ENCODE measurements at regions of chr6 and their contacts with region 1.

Region 1: GRCh38 chr6:159693128-159693893 is at the start of gene SOD2:
- DNase-seq: peak; percentile 82 to 90 (median 86)
- H3K4me3 ChIP-seq: peak within 1 kb of the TSS; percentile 81
- H3K27ac ChIP-seq: peak within 1 kb of the TSS; percentile 91 to 92
- H3K4me1 ChIP-seq: peaks cover 9% of the 10 kb centered on the region
- H3K27me3 ChIP-seq: no peaks in the 10 kb centered on the region
- CTCF ChIP-seq: peak in 2 of 3 donors; percentile 8 to 13
- EP300 ChIP-seq: no peak
- POLR2A ChIP-seq: peak; percentile 66
- total RNA-seq, gene SOD2: 164 to 580 (median 215) TPM

Region 2: GRCh38 chr6:159726918-159727716 is 33.8 kb after region 1 on chr6 and contains the start of gene WTAP:
- intact Hi-C with region 1: loop called in 2 of 4 experiments (anchors 2 kb)
- DNase-seq: peak; percentile 98
- H3K4me3 ChIP-seq: peak within 1 kb of the TSS; percentile 72
- H3K27ac ChIP-seq: peak within 1 kb of the TSS; percentile 94 to 100
- H3K4me1 ChIP-seq: peaks cover 7% of the 10 kb centered on the region
- H3K27me3 ChIP-seq: no peaks in the 10 kb centered on the region
- CTCF ChIP-seq: peak in 1 of 3 donors; percentile 6
- EP300 ChIP-seq: peak; percentile 47
- POLR2A ChIP-seq: peak; percentile 81
- total RNA-seq, gene WTAP: 89.1 to 117 (median 95.4) TPM

Region 3: GRCh38 chr6:159756508-159756907 is 63.2 kb after region 1 on chr6:
- intact Hi-C with region 1: loop called in 2 of 4 experiments (anchors 2 to 5 kb)
- DNase-seq: no peak
- H3K4me3 ChIP-seq: no peak overlapping the region
- H3K27ac ChIP-seq: no peak overlapping the region
- H3K4me1 ChIP-seq: peaks cover 4% of the 10 kb centered on the region
- H3K27me3 ChIP-seq: no peaks in the 10 kb centered on the region
- CTCF ChIP-seq: no peak
- EP300 ChIP-seq: no peak
- POLR2A ChIP-seq: no peak

Region 4: GRCh38 chr6:159761873-159762680 is 68.8 kb after region 1 on chr6 and contains the start of gene ACAT2:
- intact Hi-C with region 1: loop called in 2 of 4 experiments (anchors 2 to 5 kb)
- DNase-seq: peak; percentile 95 to 97 (median 96)
- H3K4me3 ChIP-seq: peak within 1 kb of the TSS; percentile 86
- H3K27ac ChIP-seq: peak within 1 kb of the TSS; percentile 98 to 100
- H3K4me1 ChIP-seq: peaks cover 12% of the 10 kb centered on the region
- H3K27me3 ChIP-seq: no peaks in the 10 kb centered on the region
- CTCF ChIP-seq: peak in 1 of 3 donors; percentile 33
- EP300 ChIP-seq: peak; percentile 36
- POLR2A ChIP-seq: peak; percentile 69
- total RNA-seq, gene ACAT2: 7.2 to 113 (median 20.3) TPM

Region 5: DNA sequence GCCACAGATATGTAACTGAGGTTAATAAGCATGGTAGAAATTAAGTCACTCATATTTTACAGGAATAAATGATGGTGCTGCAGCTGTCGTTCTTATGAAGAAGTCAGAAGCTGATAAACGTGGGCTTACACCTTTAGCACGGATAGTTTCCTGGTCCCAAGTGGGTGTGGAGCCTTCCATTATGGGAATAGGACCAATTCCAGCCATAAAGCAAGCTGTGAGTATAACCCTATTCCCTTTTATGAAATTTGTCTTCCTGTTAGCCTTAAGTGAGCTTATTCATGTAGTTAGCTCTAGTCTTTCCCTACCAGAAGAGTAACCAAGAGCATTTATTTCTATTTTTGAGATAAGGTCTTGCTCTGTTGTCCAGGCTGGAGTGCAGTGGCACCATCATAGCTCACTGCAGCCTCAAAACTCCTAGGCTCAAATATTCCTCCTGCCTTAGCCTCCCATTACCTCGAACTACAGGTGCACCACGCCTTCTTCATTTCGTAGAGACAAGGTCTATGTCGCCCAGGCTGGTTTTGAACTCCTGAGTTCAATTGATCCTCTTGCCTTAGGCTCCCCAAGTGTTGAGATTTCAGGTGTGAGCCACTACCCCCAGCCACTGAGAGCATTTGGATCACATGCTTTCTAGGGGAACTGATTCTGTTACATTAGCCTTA is 84.1 kb after region 1 on chr6:
- intact Hi-C with region 1: no loop called
- DNase-seq: no peak
- H3K4me3 ChIP-seq: no peak overlapping the region
- H3K27ac ChIP-seq: no peak overlapping the region
- H3K4me1 ChIP-seq: no peaks in the 10 kb centered on the region
- H3K27me3 ChIP-seq: no peaks in the 10 kb centered on the region
- CTCF ChIP-seq: no peak
- EP300 ChIP-seq: no peak
- POLR2A ChIP-seq: no peak

Region 6: GRCh38 chr6:159789377-159790148 is 96.3 kb after region 1 on chr6 and contains the start of gene TCP1:
- intact Hi-C with region 1: loop called in 2 of 4 experiments (anchors 2 to 5 kb)
- DNase-seq: peak; percentile 98 to 100 (median 99)
- H3K4me3 ChIP-seq: peak within 1 kb of the TSS; percentile 62
- H3K27ac ChIP-seq: peak within 1 kb of the TSS; percentile 95 to 97
- H3K4me1 ChIP-seq: peaks cover 11% of the 10 kb centered on the region
- H3K27me3 ChIP-seq: no peaks in the 10 kb centered on the region
- CTCF ChIP-seq: peak in 1 of 3 donors; percentile 11
- EP300 ChIP-seq: peak; percentile 21
- POLR2A ChIP-seq: peak; percentile 93
- total RNA-seq, gene TCP1: 83.5 to 189 (median 162) TPM

Region 7: DNA sequence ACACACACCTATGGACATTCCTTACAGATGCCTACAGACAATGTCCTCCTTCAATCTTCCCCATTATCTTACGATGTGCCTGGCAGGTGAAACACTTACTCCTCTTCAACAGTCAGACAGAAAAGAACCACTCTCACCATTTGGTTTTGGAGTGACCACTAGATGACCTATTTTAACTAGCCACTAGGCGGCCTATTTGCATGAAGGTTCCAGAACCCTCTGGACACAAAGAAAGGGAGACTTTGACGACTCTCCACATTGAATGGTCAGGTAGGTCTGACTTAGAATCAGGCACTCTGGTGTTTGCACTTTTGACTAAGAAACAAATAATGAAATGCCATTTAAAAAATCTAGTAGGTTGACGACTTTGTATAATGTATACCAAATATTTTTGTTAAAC is 148.7 kb after region 1 on chr6:
- intact Hi-C with region 1: loop called in 1 of 4 experiments (anchors 10 kb)
- DNase-seq: no peak
- H3K4me3 ChIP-seq: no peak overlapping the region
- H3K27ac ChIP-seq: no peak overlapping the region
- H3K4me1 ChIP-seq: peaks cover 2% of the 10 kb centered on the region
- H3K27me3 ChIP-seq: no peaks in the 10 kb centered on the region
- CTCF ChIP-seq: no peak
- EP300 ChIP-seq: no peak
- POLR2A ChIP-seq: no peak

Region 8: GRCh38 chr6:159852877-159853276 is 159.6 kb after region 1 on chr6:
- intact Hi-C with region 1: loop called in 2 of 4 experiments (anchors 5 to 10 kb)
- DNase-seq: no peak
- H3K4me3 ChIP-seq: no peak overlapping the region
- H3K27ac ChIP-seq: no peak overlapping the region
- H3K4me1 ChIP-seq: peaks cover 3% of the 10 kb centered on the region
- H3K27me3 ChIP-seq: no peaks in the 10 kb centered on the region
- CTCF ChIP-seq: peak in 1 of 3 donors; percentile 41
- EP300 ChIP-seq: no peak
- POLR2A ChIP-seq: no peak